ENCODE measurements at regions of chr21 and their contacts with region 1.

Region 1: DNA sequence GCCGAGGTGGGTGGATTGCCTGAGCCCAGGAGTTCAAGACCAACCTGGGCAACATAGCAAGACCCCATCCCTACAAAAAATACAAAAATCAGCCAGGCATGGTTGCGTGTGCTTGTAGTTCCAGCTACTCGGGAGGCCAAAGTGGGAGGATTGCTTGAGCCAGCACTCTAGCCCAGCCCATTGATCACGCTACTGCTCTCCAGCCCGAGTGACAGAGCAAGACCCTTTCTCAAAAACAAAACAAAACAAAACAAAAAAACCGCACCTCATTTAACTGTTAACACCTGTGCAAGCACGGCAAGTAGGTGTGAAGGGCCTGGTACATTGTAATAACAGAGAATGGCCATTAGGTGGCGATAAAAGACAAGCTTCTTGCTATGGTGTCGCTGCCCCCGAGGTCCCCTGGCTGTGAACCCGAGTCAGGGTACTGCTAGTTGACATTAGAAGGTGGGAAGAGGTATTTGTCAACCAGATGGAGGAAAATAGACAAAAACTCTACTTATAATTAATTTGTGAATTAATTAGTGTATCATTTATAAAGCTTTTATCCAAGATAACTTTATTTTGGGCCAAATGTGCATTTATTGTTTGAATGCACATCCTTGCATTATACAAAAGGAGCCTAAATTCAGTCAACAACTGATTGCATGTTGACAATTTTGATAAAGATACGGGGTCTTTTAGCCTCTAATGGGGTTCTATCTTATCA is 66.5 kb downstream of the SH3BGR start:
- DNase-seq: peak in 1 of 2 donors; percentile 34
- ATAC-seq: peak; percentile 58 to 80 (median 74)
- H3K4me3 ChIP-seq: no peak overlapping the region
- H3K27ac ChIP-seq: no peak overlapping the region
- H3K4me1 ChIP-seq: peaks cover 0 to 17% (median 7%) of the 10 kb centered on the region in 9 donors
- H3K27me3 ChIP-seq: no peaks in the 10 kb centered on the region
- CTCF ChIP-seq: peak; percentile 80 to 95 (median 92)

Region 2: GRCh38 chr21:39451332-39452206 is 66.7 kb before region 1 on chr21 and contains the start of gene SH3BGR:
- intact Hi-C with region 1: loop called in 1 of 10 experiments (anchors 10 kb)
- DNase-seq: peak; percentile 69 to 80
- ATAC-seq: peak; percentile 88 to 95 (median 91)
- H3K4me3 ChIP-seq: peak within 1 kb of the TSS in 9 of 10 donors; percentile 36 to 60 (median 47)
- H3K27ac ChIP-seq: peak within 1 kb of the TSS; percentile 63 to 95 (median 86)
- H3K4me1 ChIP-seq: peaks cover 0 to 40% (median 13%) of the 10 kb centered on the region in 9 donors
- H3K27me3 ChIP-seq: no peaks in the 10 kb centered on the region
- CTCF ChIP-seq: no peak
- total RNA-seq, gene SH3BGR: 89.3 to 223 (median 144) TPM

Region 3: GRCh38 chr21:39715804-39716397 is 197.6 kb after region 1 on chr21:
- intact Hi-C with region 1: loop called in 9 of 10 experiments (anchors 1 to 5 kb)
- DNase-seq: peak; percentile 16 to 52
- ATAC-seq: peak in 1 of 8 donors; percentile 22
- H3K4me3 ChIP-seq: no peak overlapping the region
- H3K27ac ChIP-seq: no peak overlapping the region
- H3K4me1 ChIP-seq: peaks cover 0 to 12% (median 0%) of the 10 kb centered on the region in 9 donors
- H3K27me3 ChIP-seq: peaks cover 0 to 7% (median 2%) of the 10 kb centered on the region in 7 donors
- CTCF ChIP-seq: peak; percentile 52 to 83 (median 67)

Measured in heart right ventricle (tissue), 16 donors.